Dorsolateral prefrontal cortex (tissue), 120 donors: ENCODE measurements at regions of chr4 and their contacts with region 1.

Region 1: DNA sequence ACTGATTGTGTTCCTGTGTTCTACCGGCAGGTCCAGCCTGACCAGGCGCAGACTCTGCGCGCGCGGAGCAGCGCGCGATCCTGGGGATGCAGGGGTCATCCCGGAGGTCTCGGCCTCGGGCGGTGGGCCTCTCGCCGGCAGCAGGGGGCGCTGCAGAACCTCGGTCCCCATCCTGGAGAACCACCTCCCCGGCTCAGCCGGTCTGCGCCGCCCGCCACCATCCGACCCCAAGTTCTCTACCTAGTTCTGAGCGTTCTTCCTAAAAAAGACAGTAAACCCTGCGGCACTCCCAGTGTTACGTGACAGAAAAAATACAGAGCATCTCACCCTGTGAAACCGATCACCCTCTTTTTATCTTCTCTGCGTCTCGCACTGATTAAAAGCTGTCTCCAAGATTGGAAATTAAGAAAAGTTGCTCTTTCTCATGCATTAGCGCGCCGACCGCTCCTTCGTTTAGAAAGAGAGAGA is 1.6 kb downstream of the TRPC3 start:
- DNase-seq: peak; percentile 32 to 85 (median 70)
- H3K4me3 ChIP-seq: peak overlapping the region; percentile 44 to 85 (median 71)
- H3K27ac ChIP-seq: peak overlapping the region in 37 of 59 donors; percentile 1 to 81 (median 61)
- H3K27me3 ChIP-seq: peaks cover 0 to 8% (median 0%) of the 10 kb centered on the region in 45 donors
- CTCF ChIP-seq: peak; percentile 32 to 94 (median 85)

Region 2: DNA sequence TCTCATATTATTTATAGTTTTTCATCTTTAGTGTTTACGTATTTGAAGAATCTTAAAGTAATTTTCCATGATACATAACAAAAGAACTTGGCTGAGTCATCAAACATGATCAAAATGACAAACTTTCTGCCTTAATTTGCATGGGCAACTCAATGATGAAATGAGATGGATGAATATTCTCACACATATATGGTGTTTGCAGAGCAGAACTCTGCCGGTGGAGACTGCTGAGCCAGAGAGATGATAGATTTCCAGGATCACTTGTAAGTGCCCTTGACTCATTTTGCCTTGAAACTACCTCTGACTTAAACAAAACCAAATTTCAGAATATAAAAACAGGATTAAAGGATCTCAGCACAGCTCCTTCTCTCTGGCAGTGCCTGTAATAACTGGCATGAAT is 36.6 kb before region 1 on chr4:
- intact Hi-C with region 1: no loop called
- DNase-seq: no peak
- H3K4me3 ChIP-seq: no peak overlapping the region
- H3K27ac ChIP-seq: no peak overlapping the region
- H3K27me3 ChIP-seq: no peaks in the 10 kb centered on the region
- CTCF ChIP-seq: no peak

Region 3: GRCh38 chr4:122151982-122152710 is 201.9 kb after region 1 on chr4 and contains the start of gene BLTP1:
- intact Hi-C with region 1: loop called in 1 of 2 experiments (anchors 5 kb)
- DNase-seq: peak; percentile 79 to 95 (median 89)
- H3K4me3 ChIP-seq: peak within 1 kb of the TSS; percentile 69 to 100 (median 96)
- H3K27ac ChIP-seq: peak within 1 kb of the TSS; percentile 82 to 97 (median 93)
- H3K27me3 ChIP-seq: no peaks in the 10 kb centered on the region
- CTCF ChIP-seq: peak in 30 of 56 donors; percentile 7 to 50 (median 27)
- total RNA-seq, gene BLTP1: 130 to 212 (median 167) TPM

Region 4: DNA sequence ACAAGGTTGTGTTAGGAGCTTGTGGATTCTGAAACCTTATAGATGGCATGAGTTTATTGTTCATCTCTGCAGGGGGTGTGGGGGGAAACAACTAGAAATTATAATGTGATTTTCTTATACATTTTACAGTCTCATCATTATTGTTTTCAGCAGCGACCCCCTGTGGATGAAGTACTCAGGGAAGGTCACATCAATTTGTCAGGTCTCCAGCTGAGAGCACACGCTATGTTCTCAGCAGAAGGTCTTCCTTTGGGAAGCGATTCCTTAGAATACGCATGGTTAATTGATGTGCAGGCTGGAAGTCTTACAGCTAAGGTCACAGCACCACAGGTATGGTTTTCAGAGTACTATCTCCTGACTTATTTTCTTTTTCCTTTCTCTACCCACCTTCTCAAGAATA is 274.1 kb after region 1 on chr4:
- intact Hi-C with region 1: loop called in 1 of 2 experiments (anchors 10 kb)
- DNase-seq: no peak
- H3K4me3 ChIP-seq: no peak overlapping the region
- H3K27ac ChIP-seq: no peak overlapping the region
- H3K27me3 ChIP-seq: no peaks in the 10 kb centered on the region
- CTCF ChIP-seq: peak in 25 of 56 donors; percentile 8 to 43 (median 27)

Region 5: GRCh38 chr4:122577808-122578781 is 627.8 kb after region 1 on chr4:
- intact Hi-C with region 1: loop called in 1 of 2 experiments (anchors 2 kb)
- DNase-seq: peak in 3 of 10 donors; percentile 25 to 54 (median 50)
- H3K4me3 ChIP-seq: no peak overlapping the region
- H3K27ac ChIP-seq: peak overlapping the region in 18 of 59 donors; percentile 1 to 78 (median 33)
- H3K27me3 ChIP-seq: peaks cover 0 to 4% (median 0%) of the 10 kb centered on the region in 45 donors
- CTCF ChIP-seq: peak; percentile 25 to 80 (median 66)